ENCODE measurements at regions of chr1 and their contacts with region 1.

Region 1: DNA sequence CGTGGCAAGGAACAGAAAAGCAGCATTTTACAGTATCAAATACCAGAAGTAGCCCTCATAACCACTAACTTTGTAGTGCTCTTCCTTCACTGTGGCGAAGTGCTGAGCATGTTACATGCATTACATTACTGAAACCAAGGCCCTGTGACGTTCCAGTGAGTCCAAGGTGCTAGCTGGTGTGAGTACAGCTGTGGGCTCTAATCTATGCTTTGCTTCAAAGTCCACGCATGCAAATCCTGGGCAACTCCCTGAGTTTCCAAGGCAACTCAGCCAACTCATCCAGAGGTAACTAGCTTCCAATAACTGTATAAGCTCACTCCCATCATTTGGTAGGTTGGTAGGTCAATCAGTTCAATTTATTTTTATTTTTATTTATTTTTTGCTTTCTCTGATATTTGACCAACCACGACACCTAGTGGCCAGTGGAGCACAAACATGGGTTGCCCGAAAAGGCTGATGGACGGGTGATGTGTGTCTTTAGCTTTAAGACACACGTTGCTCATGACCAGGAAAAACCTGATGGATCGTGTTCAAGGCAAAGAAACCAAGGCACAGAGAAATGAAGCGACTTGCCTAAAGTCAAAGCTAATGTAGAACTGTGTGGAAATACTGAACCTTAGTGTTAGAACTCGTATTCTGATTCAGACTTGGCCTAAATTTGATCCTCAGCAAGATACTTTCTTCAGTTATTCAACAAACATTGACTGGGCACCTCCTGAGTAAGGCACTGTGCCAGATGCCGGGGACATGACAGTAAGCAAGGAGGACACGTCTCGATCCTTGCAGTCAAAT is 73.0 kb downstream of the GNG12 start:
- ATAC-seq: peak; percentile 77 to 96 (median 88)
- H3K4me3 ChIP-seq: no peak overlapping the region
- H3K27ac ChIP-seq: no peak overlapping the region
- H3K4me1 ChIP-seq: peaks cover 11 to 14% of the 10 kb centered on the region in 2 donors

Region 2: DNA sequence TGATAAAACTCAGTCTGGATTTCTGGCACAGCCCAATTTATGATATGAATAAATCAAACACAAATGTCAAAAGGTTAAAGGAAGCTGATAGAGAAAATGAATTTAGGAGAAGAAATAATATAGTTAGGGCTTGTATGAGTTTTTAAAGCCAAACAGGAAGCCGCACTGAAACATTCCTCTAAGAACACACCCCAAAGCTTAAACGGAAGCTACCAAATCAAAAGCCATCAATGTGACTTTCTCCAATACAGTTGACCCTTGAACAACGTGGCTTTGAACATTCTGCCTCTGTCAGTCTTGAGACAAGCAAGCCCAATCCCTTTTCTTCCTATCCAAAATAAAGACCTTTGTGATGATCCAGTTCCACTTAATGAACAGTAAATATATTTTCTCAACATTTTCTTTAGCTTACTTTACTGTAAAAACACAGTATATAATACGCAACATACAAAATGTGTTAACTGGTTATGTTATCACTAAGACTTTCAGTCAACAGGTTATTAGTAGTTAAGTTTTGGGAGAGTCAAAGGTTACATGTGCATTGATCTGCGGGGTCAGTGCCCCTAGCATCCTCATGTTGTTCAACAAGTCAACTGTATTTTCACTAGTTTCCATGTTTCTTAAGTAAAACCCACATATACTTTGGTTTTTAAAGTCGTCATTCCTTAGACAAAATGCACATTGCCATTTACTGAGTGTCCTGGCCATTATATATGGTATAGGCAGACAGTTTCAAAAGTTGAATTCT is 341.2 kb before region 1 on chr1:
- in situ Hi-C with region 1: no loop called
- ATAC-seq: no peak
- H3K4me3 ChIP-seq: no peak overlapping the region
- H3K27ac ChIP-seq: no peak overlapping the region
- H3K4me1 ChIP-seq: no peaks in the 10 kb centered on the region

Region 3: DNA sequence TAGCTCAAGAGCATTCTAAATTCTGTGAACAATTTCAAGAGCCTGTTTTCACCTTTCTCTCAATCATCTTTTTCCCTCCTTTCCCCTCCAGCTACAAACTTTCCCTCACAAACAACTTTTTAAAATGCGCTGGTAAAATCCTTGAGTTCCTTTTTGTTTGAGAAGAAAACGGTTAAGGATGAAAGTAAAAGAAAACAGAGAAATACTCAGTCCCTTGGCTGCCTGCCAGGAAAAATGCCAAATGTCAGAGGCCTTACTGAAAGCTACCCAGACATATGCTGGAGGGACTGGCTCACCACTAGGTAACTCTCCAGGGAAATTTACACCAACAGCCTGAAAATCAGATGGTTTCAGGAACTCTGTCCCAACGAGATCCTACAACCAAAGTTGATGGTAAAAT is 319.0 kb before region 1 on chr1:
- in situ Hi-C with region 1: no loop called
- ATAC-seq: no peak
- H3K4me3 ChIP-seq: no peak overlapping the region
- H3K27ac ChIP-seq: peak overlapping the region in 1 of 2 donors; percentile 2
- H3K4me1 ChIP-seq: peaks cover 0 to 11% of the 10 kb centered on the region in 2 donors

Region 4: GRCh38 chr1:67524143-67525052 is 235.8 kb before region 1 on chr1:
- in situ Hi-C with region 1: loop called in 4 of 9 experiments (anchors 10 to 25 kb)
- ATAC-seq: peak in 3 of 8 experiments; percentile 74 to 88 (median 75)
- H3K4me3 ChIP-seq: no peak overlapping the region
- H3K27ac ChIP-seq: no peak overlapping the region
- H3K4me1 ChIP-seq: no peaks in the 10 kb centered on the region

Region 5: DNA sequence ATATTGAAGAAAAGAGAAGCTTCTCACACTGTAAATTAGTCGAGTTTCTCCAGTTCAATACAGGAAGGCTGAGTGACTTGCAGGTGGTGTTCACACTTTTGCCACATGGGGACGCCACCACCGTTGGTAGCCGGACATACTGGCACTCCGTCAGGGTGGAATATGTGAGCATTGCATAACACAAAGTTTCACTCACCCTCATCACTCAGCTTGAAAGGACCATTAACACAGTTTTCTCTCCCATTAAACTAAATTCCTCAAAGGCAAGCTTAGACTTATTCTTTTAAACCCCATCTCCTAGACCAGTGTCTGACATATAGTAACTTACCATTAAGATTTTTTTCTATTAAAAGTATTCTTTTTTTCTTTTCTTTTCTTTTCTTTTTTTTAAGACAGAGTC is 224.8 kb before region 1 on chr1:
- in situ Hi-C with region 1: loop called in 8 of 9 experiments (anchors 5 to 25 kb)
- ATAC-seq: peak; percentile 61 to 92 (median 76)
- H3K4me3 ChIP-seq: no peak overlapping the region
- H3K27ac ChIP-seq: no peak overlapping the region
- H3K4me1 ChIP-seq: peaks cover 0 to 5% of the 10 kb centered on the region in 2 donors

Region 6: DNA sequence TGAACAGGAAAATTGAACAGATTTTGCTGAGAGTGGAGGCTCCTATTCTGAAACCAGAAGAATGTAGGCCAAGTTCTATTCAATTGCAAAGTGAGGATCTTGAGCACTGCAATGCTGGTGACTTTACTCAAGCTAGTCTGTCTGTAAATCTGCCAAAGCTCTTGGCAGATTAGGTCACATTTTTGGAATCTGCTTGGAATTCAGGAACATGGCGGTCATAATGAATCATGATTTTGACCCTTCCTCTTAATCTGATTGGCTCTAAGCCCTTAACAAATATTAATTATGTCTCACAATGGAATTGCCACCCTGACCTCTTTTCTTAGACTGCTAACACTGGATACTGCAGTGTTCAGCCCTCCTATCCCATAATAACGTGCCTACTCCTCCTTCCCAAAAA is 80.2 kb after region 1 on chr1:
- in situ Hi-C with region 1: loop called in 1 of 9 experiments (anchors 10 kb)
- ATAC-seq: peak in 2 of 8 experiments; percentile 16 to 22
- H3K4me3 ChIP-seq: no peak overlapping the region
- H3K27ac ChIP-seq: no peak overlapping the region
- H3K4me1 ChIP-seq: no peaks in the 10 kb centered on the region

Region 7: GRCh38 chr1:68103884-68104554 is 343.8 kb after region 1 on chr1:
- in situ Hi-C with region 1: loop called in 3 of 9 experiments (anchors 10 to 25 kb)
- ATAC-seq: peak; percentile 62 to 97 (median 94)
- H3K4me3 ChIP-seq: no peak overlapping the region
- H3K27ac ChIP-seq: no peak overlapping the region
- H3K4me1 ChIP-seq: peaks cover 0 to 17% of the 10 kb centered on the region in 2 donors

Measured in motor neuron (in vitro differentiated cells).